ENCODE measurements at regions of chr1 and their contacts with region 1.

Region 1: DNA sequence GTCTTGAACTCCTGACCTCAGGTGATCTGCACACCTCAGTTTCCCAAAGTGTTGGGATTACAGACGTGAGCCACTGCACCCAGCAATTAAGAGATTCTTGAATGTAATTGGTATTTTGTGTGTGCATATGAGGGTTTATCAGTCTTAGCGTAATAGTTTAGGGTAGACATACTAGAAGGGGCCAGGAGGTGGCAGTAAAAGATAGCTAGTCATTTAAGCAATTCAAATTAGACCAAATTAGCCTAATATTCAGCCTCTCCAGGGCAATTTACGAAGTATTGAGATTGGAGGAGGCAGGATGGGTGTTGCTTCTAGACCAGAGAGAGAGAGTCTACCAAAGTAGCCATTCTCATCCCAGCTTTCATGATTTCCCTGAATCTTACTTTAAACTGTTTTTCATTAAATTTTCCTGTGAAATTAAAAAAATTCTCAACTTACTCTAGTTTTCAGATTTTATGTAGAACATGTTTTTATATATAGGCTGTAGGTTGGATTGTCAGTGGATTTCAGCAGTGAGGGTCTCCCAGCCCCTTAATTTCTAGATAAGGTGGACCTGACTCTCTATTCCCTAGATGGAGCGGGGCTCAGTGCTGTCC is 119.7 kb downstream of the HHAT start:
- DNase-seq: no peak
- H3K4me3 Mint-ChIP-seq: no peak overlapping the region
- H3K27ac Mint-ChIP-seq: no peak overlapping the region
- H3K4me1 Mint-ChIP-seq: peaks cover 27% of the 10 kb centered on the region
- H3K27me3 Mint-ChIP-seq: peaks cover 2% of the 10 kb centered on the region

Region 2: GRCh38 chr1:210328746-210329503 is 119.5 kb before region 1 on chr1 and contains the start of gene HHAT:
- CTCF ChIA-PET with region 1: interaction called, 8 read pairs
- POLR2A ChIA-PET with region 1: interaction called, 5 read pairs
- intact Hi-C with region 1: loop called (anchors 1 kb)
- DNase-seq: peak; percentile 76
- H3K4me3 Mint-ChIP-seq: peak within 1 kb of the TSS; percentile 89
- H3K27ac Mint-ChIP-seq: peak within 1 kb of the TSS; percentile 91
- H3K4me1 Mint-ChIP-seq: peaks cover 42% of the 10 kb centered on the region
- H3K27me3 Mint-ChIP-seq: peaks cover 5% of the 10 kb centered on the region
- total RNA-seq, gene HHAT: 1.6 to 1.8 TPM

Region 3: DNA sequence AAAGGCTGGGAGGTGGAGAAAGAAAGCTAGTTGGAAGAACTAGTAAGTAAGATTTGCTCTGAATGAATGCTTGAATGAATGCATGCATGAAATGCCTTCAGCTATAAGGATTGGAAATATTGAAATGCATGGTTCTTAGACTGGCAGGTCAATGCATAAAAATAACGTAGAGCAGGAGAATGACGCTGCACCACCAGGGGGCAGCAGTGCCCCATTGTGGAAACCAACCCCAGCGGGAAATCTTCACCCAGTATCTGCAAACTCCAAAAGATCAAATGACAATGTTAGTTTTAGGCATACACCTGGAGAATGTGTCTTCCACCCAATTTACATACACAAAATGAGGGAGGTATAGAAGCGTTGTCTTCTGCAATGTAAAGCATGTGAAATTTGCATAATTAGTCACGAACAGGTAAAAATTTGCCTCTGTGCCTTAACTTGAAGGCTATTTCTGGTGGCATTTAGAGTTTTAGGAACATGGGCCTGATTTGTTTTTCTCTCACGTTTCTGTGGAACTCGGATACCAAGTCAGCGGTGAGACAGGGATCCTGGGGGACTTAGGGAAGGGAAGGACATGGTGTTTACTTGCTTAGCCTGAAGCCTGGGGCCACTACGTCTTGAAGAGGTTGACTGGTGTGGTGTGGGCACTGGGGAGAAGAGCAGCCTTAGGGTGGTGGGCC is 41.0 kb before region 1 on chr1:
- CTCF ChIA-PET with region 1: interaction called, 54 read pairs
- POLR2A ChIA-PET with region 1: no interaction called
- intact Hi-C with region 1: loop called (anchors 1 kb)
- DNase-seq: peak; percentile 84
- H3K4me3 Mint-ChIP-seq: no peak overlapping the region
- H3K27ac Mint-ChIP-seq: no peak overlapping the region
- H3K4me1 Mint-ChIP-seq: peaks cover 2% of the 10 kb centered on the region
- H3K27me3 Mint-ChIP-seq: no peaks in the 10 kb centered on the region

Region 4: DNA sequence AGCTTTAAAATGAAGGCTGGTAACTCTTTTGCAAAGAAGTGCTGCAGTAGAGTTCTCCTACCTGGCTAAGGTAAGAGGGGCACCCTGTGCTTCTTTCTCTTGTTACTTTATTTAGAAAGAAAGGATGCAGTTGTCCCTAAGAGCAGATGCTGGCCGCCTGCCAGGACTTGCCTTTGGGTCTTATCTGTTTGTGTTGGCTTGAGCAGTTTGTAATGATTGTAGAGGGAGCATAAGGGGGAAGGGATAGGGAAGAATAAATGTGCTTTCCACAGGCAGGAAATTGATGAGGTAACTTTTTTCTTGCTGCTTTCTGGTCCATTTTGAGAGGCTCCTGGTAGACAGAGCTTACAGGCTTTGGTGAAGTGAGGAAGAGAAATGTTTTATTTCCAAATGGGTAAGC is 109.9 kb after region 1 on chr1:
- CTCF ChIA-PET with region 1: no interaction called
- POLR2A ChIA-PET with region 1: no interaction called
- intact Hi-C with region 1: no loop called
- DNase-seq: no peak
- H3K4me3 Mint-ChIP-seq: no peak overlapping the region
- H3K27ac Mint-ChIP-seq: no peak overlapping the region
- H3K4me1 Mint-ChIP-seq: no peaks in the 10 kb centered on the region
- H3K27me3 Mint-ChIP-seq: no peaks in the 10 kb centered on the region

Region 5: GRCh38 chr1:210882414-210883221 is 434.2 kb after region 1 on chr1:
- CTCF ChIA-PET with region 1: no interaction called
- POLR2A ChIA-PET with region 1: no interaction called
- intact Hi-C with region 1: loop called (anchors 5 kb)
- DNase-seq: no peak
- H3K4me3 Mint-ChIP-seq: no peak overlapping the region
- H3K27ac Mint-ChIP-seq: peak overlapping the region; percentile 12
- H3K4me1 Mint-ChIP-seq: peaks cover 8% of the 10 kb centered on the region
- H3K27me3 Mint-ChIP-seq: peaks cover 26% of the 10 kb centered on the region

Region 6: DNA sequence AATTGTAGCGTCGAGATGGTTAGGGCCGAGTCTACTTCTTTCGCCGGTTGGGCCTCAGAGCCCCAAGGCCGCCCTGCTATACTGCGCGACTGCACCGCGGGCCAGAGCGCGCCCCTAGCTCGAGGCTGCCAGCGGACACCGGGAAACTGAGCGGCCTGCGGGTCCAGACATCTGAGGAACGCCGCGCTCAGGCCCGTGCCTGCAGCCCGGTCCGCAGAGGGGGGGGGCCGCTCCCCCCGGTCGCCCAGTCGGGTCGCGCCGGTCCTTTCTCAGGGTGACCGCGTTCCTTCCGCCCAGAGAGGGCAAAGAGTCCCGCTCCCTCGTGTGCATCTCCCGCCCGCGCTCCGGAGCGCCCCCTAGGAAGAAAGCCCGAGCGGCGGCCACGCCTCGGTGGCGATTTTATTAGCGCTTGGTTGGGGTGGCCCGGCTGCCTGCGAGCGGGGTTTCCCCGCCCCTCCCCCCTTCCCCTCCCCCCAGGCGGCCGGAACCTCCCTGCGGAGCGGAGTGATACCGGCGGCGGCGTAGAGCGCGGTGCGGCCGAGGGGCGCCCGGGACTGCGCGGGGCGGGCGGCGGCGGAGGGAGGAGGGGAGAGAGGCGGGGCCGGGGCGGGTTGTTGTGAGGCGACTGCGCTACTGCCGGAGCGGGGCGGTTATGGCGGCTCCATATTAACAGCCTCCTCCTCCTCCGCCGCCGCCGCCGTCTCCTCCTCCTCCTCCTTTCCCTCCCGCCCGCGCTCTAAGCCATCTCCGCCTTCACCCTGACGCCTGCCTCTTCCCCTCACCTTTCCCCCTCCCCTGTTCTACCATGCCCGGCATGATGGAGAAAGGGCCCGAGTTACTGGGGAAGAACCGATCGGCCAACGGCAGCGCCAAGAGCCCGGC is 810.6 kb after region 1 on chr1 and contains the start of gene RCOR3:
- CTCF ChIA-PET with region 1: interaction called, 4 read pairs
- POLR2A ChIA-PET with region 1: no interaction called
- intact Hi-C with region 1: loop called (anchors 1 kb)
- DNase-seq: peak; percentile 95
- H3K4me3 Mint-ChIP-seq: peak within 1 kb of the TSS; percentile 83
- H3K27ac Mint-ChIP-seq: peak within 1 kb of the TSS; percentile 93
- H3K4me1 Mint-ChIP-seq: peaks cover 16% of the 10 kb centered on the region
- H3K27me3 Mint-ChIP-seq: no peaks in the 10 kb centered on the region
- total RNA-seq, gene RCOR3: 30.2 to 32.7 TPM

Region 7: DNA sequence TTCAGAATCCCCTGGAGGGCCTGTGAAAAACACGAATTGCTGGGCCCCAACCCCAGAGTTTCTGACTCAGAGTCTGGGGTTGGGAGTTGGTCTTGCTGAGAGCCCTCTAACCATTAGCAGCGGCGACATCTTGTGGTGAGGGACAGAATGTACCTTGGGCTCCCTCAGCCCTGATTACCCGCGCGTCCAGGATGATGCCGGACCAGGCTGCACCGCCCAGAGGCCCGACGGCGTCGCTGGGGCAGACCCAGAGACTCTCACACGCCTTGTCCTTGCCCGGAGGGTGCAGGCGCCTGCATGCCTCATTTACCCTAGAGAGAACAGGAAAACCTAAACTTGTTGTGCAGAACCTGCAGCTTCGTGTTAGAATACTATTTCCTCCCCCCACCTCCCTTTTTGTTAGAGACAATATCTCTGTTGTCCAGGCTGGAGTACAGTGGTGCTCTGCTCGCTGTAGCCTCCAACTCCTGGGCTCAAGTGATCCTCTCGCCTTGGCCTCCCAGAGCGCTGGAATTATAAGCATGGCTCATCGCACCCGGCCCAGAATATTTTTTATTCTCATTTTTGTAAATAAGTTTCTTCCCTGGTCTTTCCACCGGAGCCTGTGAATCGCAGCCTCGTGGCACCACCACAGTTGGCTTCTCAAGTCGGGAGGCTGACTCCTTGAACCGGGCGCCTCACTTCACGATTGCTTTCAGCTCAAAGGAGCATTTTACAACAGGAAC is 1065.8 kb after region 1 on chr1:
- CTCF ChIA-PET with region 1: interaction called, 4 read pairs
- POLR2A ChIA-PET with region 1: no interaction called
- intact Hi-C with region 1: loop called (anchors 5 kb)
- DNase-seq: peak; percentile 88
- H3K4me3 Mint-ChIP-seq: peak overlapping the region; percentile 56
- H3K27ac Mint-ChIP-seq: no peak overlapping the region
- H3K4me1 Mint-ChIP-seq: peaks cover 23% of the 10 kb centered on the region
- H3K27me3 Mint-ChIP-seq: no peaks in the 10 kb centered on the region

Measured in activated CD4-positive, alpha-beta memory T cell treated with anti-CD3 and anti-CD28 coated beads for 36 hours (primary cell).